ENCODE measurements at regions of chr17 and their contacts with region 1.

Region 1: DNA sequence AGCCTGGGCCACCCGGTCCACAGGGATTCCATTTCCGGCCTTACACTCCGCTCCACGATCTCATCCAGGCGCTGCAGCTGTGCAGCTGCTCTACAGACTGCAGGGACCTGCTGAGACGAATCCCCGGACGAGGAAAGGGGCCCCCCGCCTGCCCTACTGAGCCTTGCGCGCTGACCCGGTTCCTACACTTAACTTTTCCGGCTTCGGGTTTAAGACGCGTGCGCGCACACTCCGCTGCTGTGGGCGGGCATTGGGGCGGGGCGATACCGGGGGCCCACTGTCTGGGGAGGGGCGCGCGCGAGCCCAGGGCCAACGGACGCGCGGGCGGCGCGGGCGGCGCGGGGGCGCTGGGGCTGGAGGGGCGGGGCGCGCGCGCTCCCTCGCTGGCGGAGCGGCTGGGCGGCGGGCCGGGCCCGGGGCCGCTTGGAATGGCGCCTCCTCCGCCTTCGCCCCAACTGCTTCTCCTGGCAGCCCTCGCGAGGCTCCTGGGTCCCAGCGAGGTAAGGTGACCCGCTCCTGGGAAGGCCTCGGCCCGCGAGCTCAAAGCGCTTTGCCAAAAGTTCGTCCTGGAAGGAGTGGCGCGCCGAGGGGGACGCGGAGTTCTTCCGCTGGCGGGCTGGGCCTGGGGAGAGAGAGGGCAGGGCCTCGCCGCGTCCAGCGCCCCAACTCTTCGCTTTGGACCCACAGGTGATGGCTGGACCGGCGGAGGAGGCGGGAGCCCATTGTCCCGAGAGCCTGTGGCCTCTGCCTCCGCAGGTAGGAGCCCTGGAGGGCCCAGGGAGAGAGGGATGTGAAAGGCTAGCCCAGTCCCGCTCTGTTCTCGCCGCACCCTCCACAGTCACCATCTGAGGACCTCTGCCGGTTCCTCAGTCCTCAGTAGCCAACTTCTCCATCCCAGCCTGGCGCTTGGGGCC is at the start of gene TP53I13:
- DNase-seq: peak; percentile 82 to 90
- ATAC-seq: peak; percentile 40 to 62
- H3K4me3 ChIP-seq: peak within 1 kb of the TSS; percentile 62
- H3K27ac ChIP-seq: peak within 1 kb of the TSS; percentile 92 to 94
- H3K4me1 ChIP-seq: peaks cover 20% of the 10 kb centered on the region
- CTCF ChIP-seq: no peak
- EP300 ChIP-seq: no peak
- POLR2A ChIP-seq: peak; percentile 81
- RAD21 ChIP-seq: no peak
- polyA plus RNA-seq, gene TP53I13: 27.5 and 31.3 TPM in 2 replicates

Region 2: GRCh38 chr17:29376667-29377270 is 191.8 kb before region 1 on chr17:
- CTCF ChIA-PET with region 1: interaction called, 100 read pairs
- POLR2A ChIA-PET with region 1: no interaction called
- DNase-seq: peak; percentile 55 to 76
- ATAC-seq: peak; percentile 94 to 97
- H3K4me3 ChIP-seq: no peak overlapping the region
- H3K27ac ChIP-seq: peak overlapping the region in 1 of 2 experiments; percentile 77; a peak in 3 of 6 replicates
- H3K4me1 ChIP-seq: peaks cover 43% of the 10 kb centered on the region
- CTCF ChIP-seq: no peak
- EP300 ChIP-seq: no peak
- POLR2A ChIP-seq: no peak
- RAD21 ChIP-seq: no peak

Region 3: GRCh38 chr17:29533976-29534375 is 34.6 kb before region 1 on chr17:
- CTCF ChIA-PET with region 1: interaction called, 14 read pairs
- POLR2A ChIA-PET with region 1: interaction called, 4 read pairs
- DNase-seq: no peak
- ATAC-seq: no peak
- H3K4me3 ChIP-seq: no peak overlapping the region
- H3K27ac ChIP-seq: no peak overlapping the region
- H3K4me1 ChIP-seq: no peaks in the 10 kb centered on the region
- CTCF ChIP-seq: no peak
- EP300 ChIP-seq: no peak
- POLR2A ChIP-seq: no peak
- RAD21 ChIP-seq: no peak

Region 4: DNA sequence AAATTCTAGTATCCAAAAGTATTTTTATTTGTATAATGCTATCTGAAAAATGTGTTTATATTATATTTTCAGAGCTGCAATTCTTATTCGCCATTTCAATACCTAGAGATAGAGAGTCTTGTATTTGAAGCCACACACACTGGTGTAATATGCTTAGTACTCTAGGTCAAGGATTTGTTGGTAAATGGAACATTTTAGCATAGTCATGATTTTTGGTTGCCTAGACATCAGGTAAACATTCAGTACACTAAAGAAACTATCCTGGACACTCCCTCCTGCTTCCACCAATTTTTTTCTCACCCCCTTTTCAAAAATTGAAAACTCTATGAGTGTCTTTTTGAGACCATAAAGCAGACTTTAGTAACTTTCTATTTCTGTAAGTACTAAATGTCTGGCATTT is 22.5 kb before region 1 on chr17:
- CTCF ChIA-PET with region 1: interaction called, 11 read pairs
- POLR2A ChIA-PET with region 1: no interaction called
- DNase-seq: peak; percentile 34 to 67
- ATAC-seq: peak; percentile 59 to 80; a peak in 4 of 6 replicates
- H3K4me3 ChIP-seq: no peak overlapping the region
- H3K27ac ChIP-seq: no peak overlapping the region
- H3K4me1 ChIP-seq: peaks cover 29% of the 10 kb centered on the region
- CTCF ChIP-seq: no peak
- EP300 ChIP-seq: no peak
- POLR2A ChIP-seq: no peak
- RAD21 ChIP-seq: no peak

Region 5: GRCh38 chr17:29555840-29556239 is 12.7 kb before region 1 on chr17:
- CTCF ChIA-PET with region 1: interaction called, 383 read pairs
- POLR2A ChIA-PET with region 1: interaction called, 10 read pairs
- DNase-seq: peak; percentile 43 to 70
- ATAC-seq: peak; percentile 66 to 79
- H3K4me3 ChIP-seq: no peak overlapping the region
- H3K27ac ChIP-seq: peak overlapping the region in 1 of 2 experiments; percentile 37; a peak in 2 of 6 replicates
- H3K4me1 ChIP-seq: peaks cover 33% of the 10 kb centered on the region
- CTCF ChIP-seq: no peak
- EP300 ChIP-seq: no peak
- POLR2A ChIP-seq: no peak
- RAD21 ChIP-seq: no peak

Region 6: DNA sequence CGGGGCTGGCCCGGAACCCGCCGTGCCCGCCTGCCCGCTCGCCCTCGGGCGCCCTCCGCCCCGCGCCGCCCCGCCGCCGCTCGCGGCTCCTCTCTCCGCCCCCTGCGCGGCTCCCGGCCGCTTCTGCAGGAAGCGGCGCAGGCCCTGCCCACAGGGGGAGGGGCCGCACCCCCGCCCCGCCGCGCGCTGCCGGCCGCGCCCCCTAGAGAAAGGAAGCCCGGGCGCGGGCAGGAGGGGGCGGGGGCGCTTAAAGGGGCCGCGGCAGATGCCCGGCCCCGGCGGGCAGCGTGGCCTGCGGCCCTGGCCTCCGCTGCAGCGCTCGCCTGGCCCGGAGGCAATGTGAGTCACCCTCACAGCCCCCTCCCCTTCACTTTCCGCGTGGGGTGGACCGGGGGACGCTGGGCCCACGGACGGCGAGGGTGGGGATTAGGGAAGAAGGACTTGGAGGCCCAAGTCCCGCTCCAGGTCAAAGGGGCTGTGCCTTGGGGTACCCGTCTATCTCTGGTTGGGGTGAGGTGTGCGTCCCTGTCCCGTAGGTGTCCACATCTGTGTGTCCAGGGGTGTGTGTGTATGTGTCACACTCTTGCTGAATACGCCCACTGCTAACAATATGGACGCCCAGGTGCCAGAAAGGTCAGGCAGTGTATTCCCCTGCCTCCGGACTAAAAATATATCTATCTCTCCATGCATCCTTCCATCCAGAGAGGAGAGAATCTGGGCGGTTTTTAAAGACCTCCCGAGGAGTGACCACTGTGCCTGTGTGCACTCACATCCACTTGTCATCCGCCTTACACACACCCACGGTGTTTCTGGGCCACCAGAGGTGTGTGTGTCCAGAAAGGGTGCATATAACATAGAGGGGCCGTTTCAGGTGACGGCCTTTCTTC is 21.2 kb after region 1 on chr17 and contains the start of gene GIT1:
- CTCF ChIA-PET with region 1: interaction called, 474 read pairs
- POLR2A ChIA-PET with region 1: interaction called, 21 read pairs
- DNase-seq: peak; percentile 85 to 92
- ATAC-seq: peak; percentile 21 to 40
- H3K4me3 ChIP-seq: peak within 1 kb of the TSS; percentile 82
- H3K27ac ChIP-seq: peak within 1 kb of the TSS; percentile 95 to 96
- H3K4me1 ChIP-seq: peaks cover 56% of the 10 kb centered on the region
- CTCF ChIP-seq: no peak
- EP300 ChIP-seq: no peak
- POLR2A ChIP-seq: peak; percentile 63
- RAD21 ChIP-seq: no peak
- polyA plus RNA-seq, gene GIT1: 53.0 and 56.8 TPM in 2 replicates

Region 7: DNA sequence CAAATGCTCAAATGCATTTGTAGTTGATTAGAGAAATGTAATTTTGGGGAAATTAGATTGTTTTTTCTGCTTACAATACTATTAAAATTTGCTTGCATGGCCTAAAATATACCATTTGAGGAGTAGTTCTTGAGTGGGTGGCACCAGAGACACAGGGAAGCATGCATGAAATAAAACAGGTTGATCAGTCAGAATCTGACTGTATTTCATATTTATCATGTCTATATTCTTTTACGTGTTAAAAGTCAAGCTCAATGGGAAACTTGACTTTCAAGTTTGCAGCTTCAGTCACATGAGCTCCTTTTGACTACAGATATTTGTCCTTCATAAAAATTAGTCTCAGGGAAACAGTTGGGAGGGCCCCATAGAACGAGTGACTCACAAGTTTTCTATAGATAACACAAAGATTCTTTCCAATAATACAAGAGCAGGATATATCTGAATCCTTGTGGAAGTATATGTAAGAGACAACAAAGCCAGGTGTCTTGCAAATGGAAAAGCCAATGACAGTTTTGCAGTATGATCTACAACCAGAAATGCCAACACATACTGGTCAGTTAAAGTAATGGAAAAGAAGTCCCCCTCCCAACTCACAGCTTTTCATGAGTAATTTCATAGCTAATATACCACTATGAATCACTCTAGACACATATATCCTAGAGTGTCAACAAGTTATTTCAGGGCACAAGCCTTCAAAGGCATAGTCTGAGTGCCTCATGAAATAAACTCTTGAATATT is 96.3 kb after region 1 on chr17:
- CTCF ChIA-PET with region 1: no interaction called
- POLR2A ChIA-PET with region 1: no interaction called
- DNase-seq: peak; percentile 22 to 29
- ATAC-seq: peak in 1 of 2 experiments; percentile 75; a peak in 3 of 6 replicates
- H3K4me3 ChIP-seq: no peak overlapping the region
- H3K27ac ChIP-seq: 0 out of 6 replicates have a peak overlapping the region, but pooled peaks of 1 of the 2 experiments have one; percentile 12
- H3K4me1 ChIP-seq: peaks cover 30% of the 10 kb centered on the region
- CTCF ChIP-seq: no peak
- EP300 ChIP-seq: no peak
- POLR2A ChIP-seq: no peak
- RAD21 ChIP-seq: no peak

Measured in A549 (cell line).